H1 (cell line): ENCODE measurements at regions of chr16 and their contacts with region 1.

Region 1: DNA sequence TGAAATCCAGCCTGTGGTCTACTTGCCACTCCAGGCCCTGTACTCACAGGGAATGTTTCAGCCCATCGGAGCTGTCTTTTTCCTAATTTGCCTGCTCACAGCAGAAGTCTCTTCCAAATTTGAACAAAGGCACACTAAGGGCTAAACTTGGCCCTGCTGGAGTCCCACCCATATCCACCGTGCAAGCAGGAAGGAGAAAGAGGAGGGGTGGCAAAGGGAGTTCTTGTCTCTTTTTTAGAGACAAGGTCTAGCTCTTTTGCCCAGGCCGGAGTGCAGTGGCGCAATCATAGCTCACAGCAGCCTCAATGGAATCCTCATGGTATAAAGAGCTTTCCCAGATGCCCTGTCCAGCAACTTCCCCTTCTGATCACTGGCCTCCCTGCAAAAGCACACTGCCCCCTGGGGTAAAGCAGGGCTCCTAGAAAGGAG is 2.7 kb upstream of the PRM1 start:
- DNase-seq: no peak
- H3K4me3 ChIP-seq: no peak overlapping the region
- H3K27ac ChIP-seq: no peak overlapping the region
- H3K4me1 ChIP-seq: peaks cover 0 to 5% (median 1%) of the 10 kb centered on the region in 4 experiments; a peak in 2 of 7 replicates
- H3K27me3 ChIP-seq: no peaks in the 10 kb centered on the region
- CTCF ChIP-seq: peak in 1 of 3 experiments; percentile 7; a peak in 1 of 4 replicates
- EP300 ChIP-seq: no peak
- POLR2A ChIP-seq: no peak
- RAD21 ChIP-seq: peak in 1 of 2 experiments; percentile 16; a peak in 1 of 4 replicates

Region 2: DNA sequence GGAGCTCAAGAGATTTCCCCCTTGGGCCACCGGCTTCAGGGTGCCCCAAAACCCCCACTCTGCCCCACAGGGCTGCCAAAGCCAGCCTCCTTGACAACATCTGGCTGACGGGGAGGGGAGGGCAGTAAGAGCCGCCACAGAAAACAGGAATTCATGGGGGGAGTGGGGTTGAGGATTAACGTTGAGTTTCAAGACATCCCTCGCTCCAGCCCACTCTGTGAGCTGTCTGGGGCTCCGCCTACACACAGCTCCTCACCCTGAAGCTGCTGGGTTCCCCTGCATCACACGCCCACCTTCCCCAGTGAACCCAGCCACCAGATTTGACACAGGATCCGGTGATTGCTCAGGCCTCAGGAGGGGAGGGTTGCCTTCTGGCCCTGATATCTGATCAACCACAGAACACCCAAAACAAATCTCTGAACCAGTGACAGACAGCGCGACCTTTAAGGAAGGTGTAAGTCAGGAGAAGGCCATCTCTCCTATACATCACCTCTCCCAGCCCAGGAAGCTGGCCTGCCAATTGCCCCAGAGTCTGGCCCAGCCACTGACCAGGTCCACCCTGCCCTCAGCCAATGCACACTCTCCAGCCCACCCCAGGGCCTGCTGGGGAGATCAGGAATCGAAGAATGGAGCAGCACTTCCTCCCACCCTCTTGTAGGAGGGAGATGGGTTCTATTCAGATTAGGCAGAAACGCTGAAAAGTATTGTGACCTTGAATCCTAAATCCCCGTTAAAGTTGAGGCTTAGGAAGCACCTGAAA is 207.4 kb before region 1 on chr16:
- CTCF ChIA-PET with region 1: no interaction called
- POLR2A ChIA-PET with region 1: no interaction called
- DNase-seq: no peak
- H3K4me3 ChIP-seq: no peak overlapping the region
- H3K27ac ChIP-seq: no peak overlapping the region
- H3K4me1 ChIP-seq: no peaks in the 10 kb centered on the region; a peak in 3 of 7 replicates
- H3K27me3 ChIP-seq: no peaks in the 10 kb centered on the region
- CTCF ChIP-seq: no peak
- EP300 ChIP-seq: no peak
- POLR2A ChIP-seq: no peak
- RAD21 ChIP-seq: no peak

Region 3: DNA sequence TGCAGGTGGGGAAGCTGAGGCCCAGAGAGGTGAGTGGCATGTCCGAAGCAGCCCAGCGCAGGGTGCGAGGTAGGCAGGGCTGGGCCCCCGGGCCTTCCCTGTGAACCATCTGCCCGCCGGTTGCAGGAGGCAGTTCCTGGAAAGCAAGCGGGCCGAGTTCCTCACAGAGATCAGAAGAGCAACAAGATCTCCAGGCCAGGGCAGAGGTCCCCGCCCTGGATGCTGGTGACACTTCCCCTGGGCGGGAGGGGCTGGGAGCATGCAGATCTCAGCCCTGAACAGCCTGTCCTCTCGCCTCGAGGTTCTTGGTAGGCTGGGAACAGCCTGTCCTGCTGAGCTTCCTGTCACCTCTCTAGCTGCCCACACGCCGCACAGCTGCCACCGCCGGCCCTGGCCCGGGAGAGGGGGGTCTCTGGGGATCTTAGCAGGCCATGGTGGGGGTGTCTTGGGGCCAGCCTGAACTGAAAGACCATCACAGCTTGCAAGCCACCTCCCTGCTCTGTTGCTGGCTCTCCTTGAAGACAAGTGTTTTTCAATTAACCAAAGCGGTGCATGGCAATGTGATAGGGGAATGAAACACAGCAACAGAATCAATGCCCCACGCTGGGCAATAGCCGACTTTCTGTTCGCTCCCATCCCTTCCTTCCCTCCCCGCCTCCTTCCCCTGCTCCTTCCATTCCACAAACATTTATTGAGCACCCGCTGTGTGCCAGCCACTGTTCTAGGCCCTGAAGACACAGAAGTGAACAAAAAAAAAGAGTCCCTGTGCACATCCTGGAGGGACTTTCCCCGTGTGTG is 59.5 kb before region 1 on chr16:
- CTCF ChIA-PET with region 1: no interaction called
- POLR2A ChIA-PET with region 1: no interaction called
- DNase-seq: no peak
- H3K4me3 ChIP-seq: no peak overlapping the region
- H3K27ac ChIP-seq: no peak overlapping the region
- H3K4me1 ChIP-seq: no peaks in the 10 kb centered on the region; a peak in 2 of 7 replicates
- H3K27me3 ChIP-seq: no peaks in the 10 kb centered on the region
- CTCF ChIP-seq: no peak
- EP300 ChIP-seq: no peak
- POLR2A ChIP-seq: no peak
- RAD21 ChIP-seq: no peak; a peak in 1 of 4 replicates

Region 4: GRCh38 chr16:11273721-11274324 is 10.0 kb before region 1 on chr16:
- CTCF ChIA-PET with region 1: interaction called, 12 read pairs
- POLR2A ChIA-PET with region 1: interaction called, 4 read pairs
- DNase-seq: no peak
- H3K4me3 ChIP-seq: no peak overlapping the region
- H3K27ac ChIP-seq: no peak overlapping the region
- H3K4me1 ChIP-seq: peaks cover 0 to 5% (median 0%) of the 10 kb centered on the region in 4 experiments; a peak in 2 of 7 replicates
- H3K27me3 ChIP-seq: no peaks in the 10 kb centered on the region
- CTCF ChIP-seq: no peak
- EP300 ChIP-seq: no peak
- POLR2A ChIP-seq: no peak
- RAD21 ChIP-seq: no peak